IMR-90 (cell line): ENCODE measurements at regions of chr10 and their contacts with region 1.

Region 1: DNA sequence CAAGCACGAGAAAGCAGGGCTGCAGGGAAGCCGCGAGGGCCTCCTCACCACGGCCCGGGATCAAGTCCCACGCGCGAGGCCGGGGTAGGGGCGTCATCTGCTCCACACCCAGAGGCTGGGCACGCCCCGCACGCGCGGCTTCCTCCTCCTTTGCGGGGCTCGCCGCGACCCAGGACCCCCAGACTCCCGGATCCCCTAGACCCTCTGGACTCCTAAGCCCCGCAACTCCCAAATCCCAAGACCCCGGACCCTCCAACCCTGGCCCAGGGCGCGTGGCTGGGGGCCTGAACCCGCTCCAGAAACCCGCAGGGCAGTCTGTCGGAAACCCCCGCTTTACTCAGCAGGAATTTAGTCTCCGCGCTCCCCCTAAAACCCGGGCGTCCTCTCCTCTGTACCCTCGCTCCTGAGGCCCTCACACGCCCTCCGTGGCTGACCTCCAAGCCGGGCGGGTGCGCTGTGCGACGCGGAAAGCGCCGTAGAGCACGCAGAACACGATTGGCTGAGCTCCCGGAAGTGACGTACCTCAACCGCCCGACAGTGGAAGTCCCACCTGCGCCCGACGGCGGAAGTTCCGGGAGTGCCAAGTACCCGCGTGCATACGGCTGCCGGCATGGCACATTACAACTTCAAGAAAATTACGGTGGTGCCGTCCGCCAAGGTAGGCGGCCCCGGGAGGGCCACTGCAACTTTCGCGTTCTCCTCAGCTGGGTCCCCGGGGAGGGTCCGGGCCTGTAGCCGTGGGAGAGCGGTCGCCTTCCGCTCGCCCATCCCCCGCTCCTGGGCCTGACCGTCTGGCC is at the start of gene GTPBP4:
- DNase-seq: peak; percentile 97
- ATAC-seq: peak; percentile 89
- H3K4me3 ChIP-seq: peak within 1 kb of the TSS; percentile 63
- H3K27ac ChIP-seq: peak within 1 kb of the TSS; percentile 86
- H3K4me1 ChIP-seq: peaks cover 13% of the 10 kb centered on the region
- H3K27me3 ChIP-seq: no peaks in the 10 kb centered on the region
- CTCF ChIP-seq: peak; percentile 28; the same call in 1 of the 2 replicates
- POLR2A ChIP-seq: peak; percentile 87; the same call in 1 of the 2 replicates
- RAD21 ChIP-seq: no peak
- total RNA-seq, gene GTPBP4: 46.2 and 71.7 TPM in 2 replicates

Region 2: GRCh38 chr10:895319-895718 is 92.7 kb before region 1 on chr10:
- CTCF ChIA-PET with region 1: no interaction called
- POLR2A ChIA-PET with region 1: interaction called, 14 read pairs
- dilution Hi-C with region 1: no loop called
- in situ Hi-C with region 1: no loop called
- intact Hi-C with region 1: no loop called
- DNase-seq: no peak
- ATAC-seq: no peak
- H3K4me3 ChIP-seq: no peak overlapping the region
- H3K27ac ChIP-seq: no peak overlapping the region
- H3K4me1 ChIP-seq: no peaks in the 10 kb centered on the region; the same call in 1 of the 2 replicates
- H3K27me3 ChIP-seq: no peaks in the 10 kb centered on the region
- CTCF ChIP-seq: no peak
- POLR2A ChIP-seq: no peak
- RAD21 ChIP-seq: no peak

Region 3: DNA sequence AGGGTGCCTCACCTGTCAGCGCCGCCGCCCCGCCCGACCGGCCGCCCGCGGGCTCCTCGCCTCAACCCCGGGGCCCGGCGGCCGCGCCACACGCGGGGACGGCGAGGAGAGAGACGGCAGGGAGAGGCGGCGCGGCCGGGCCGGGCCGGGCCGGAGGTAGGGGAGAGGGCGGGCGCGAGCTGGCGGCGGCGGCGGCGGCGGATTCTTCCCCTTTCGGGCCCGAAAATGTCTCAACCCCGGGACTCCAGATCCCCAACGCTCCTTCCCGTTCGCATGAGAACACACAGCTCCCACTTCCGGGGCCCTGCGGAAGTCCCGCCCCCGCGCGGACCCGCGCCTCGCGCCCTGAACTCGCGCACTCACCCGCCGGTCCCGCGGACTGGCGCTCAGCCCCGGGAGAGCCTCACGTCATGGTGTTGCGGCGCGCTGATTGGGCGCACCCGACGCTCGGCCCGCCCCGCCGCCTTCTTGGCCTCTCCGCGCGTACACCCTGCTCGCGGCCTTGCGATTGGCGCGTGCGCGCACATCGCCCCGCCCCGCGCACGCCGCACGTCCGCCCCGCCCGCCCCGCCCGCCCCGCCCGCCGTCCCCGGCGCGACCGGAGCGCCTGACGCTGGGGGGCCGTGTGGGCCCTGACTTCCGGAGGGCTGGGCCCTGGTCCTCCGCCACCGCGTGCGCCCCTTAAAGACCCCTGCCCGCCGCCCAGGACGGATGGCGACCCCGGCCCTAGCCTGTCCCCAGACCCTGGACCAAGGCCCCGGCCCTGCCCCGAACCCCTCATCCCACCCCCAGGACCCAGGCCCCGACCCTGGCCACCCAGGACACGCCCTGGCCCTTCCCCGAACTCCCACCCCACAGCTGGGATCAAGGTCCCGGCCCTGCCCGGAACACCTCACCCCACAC is 56.4 kb before region 1 on chr10 and contains the start of gene LARP4B:
- CTCF ChIA-PET with region 1: no interaction called
- POLR2A ChIA-PET with region 1: interaction called, 4 read pairs
- dilution Hi-C with region 1: no loop called
- in situ Hi-C with region 1: no loop called
- intact Hi-C with region 1: loop called (anchors 1 kb)
- DNase-seq: peak; percentile 97
- ATAC-seq: peak; percentile 99
- H3K4me3 ChIP-seq: peak within 1 kb of the TSS; percentile 67
- H3K27ac ChIP-seq: peak within 1 kb of the TSS; percentile 96
- H3K4me1 ChIP-seq: no peaks in the 10 kb centered on the region; the same call in 1 of the 2 replicates
- H3K27me3 ChIP-seq: no peaks in the 10 kb centered on the region
- CTCF ChIP-seq: no peak
- POLR2A ChIP-seq: peak; percentile 80
- RAD21 ChIP-seq: no peak
- total RNA-seq, gene LARP4B: 25.5 and 30.8 TPM in 2 replicates

Region 4: DNA sequence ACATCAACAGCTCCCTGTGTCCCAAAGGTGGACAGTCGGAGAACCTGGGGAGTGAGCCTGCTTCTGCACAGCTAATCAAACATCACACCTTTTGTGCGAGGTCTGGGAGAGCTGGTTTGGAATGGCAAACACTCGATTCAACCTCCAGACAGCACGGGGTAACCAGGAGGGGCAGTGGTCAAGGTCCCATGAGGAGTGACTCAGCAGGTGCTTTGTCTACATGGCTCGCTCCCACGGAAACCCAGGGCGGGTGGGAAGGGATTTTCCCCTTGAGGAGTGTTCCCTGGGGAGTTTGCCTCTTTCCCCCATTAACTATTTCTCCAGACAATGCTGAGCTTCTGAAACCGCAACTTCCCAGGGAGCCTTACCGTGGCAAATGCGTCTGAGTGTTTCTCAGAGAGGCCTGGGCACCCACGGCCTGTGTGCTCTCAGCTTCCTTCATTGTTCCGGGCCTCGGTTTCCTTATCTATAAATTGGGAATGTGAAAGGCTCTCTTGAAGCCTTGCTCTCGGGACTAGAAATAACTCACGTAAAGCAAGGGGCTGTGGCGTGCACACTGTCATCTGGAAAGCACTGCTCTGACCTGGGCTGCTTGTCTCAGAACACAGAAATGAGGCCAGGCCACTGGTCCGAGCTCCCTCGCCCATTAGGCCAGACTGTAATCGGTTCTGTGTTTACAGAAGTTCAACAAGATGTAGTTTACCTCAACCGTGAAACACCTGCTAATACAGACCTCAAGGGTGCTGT is 13.9 kb before region 1 on chr10:
- CTCF ChIA-PET with region 1: no interaction called
- POLR2A ChIA-PET with region 1: interaction called, 12 read pairs
- dilution Hi-C with region 1: no loop called
- in situ Hi-C with region 1: no loop called
- intact Hi-C with region 1: no loop called
- DNase-seq: no peak
- ATAC-seq: no peak
- H3K4me3 ChIP-seq: no peak overlapping the region
- H3K27ac ChIP-seq: no peak overlapping the region
- H3K4me1 ChIP-seq: peaks cover 9% of the 10 kb centered on the region
- H3K27me3 ChIP-seq: no peaks in the 10 kb centered on the region
- CTCF ChIP-seq: no peak
- POLR2A ChIP-seq: no peak
- RAD21 ChIP-seq: no peak

Region 5: GRCh38 chr10:1036341-1036791 is 48.3 kb after region 1 on chr10:
- CTCF ChIA-PET with region 1: no interaction called
- POLR2A ChIA-PET with region 1: no interaction called
- dilution Hi-C with region 1: no loop called
- in situ Hi-C with region 1: no loop called
- intact Hi-C with region 1: no loop called
- DNase-seq: peak; percentile 87
- ATAC-seq: no peak; the same call in 1 of the 2 replicates
- H3K4me3 ChIP-seq: no peak overlapping the region
- H3K27ac ChIP-seq: no peak overlapping the region
- H3K4me1 ChIP-seq: no peaks in the 10 kb centered on the region
- H3K27me3 ChIP-seq: no peaks in the 10 kb centered on the region
- CTCF ChIP-seq: no peak
- POLR2A ChIP-seq: no peak
- RAD21 ChIP-seq: no peak